ENCODE measurements at regions of chr19 and their contacts with region 1.

Region 1: DNA sequence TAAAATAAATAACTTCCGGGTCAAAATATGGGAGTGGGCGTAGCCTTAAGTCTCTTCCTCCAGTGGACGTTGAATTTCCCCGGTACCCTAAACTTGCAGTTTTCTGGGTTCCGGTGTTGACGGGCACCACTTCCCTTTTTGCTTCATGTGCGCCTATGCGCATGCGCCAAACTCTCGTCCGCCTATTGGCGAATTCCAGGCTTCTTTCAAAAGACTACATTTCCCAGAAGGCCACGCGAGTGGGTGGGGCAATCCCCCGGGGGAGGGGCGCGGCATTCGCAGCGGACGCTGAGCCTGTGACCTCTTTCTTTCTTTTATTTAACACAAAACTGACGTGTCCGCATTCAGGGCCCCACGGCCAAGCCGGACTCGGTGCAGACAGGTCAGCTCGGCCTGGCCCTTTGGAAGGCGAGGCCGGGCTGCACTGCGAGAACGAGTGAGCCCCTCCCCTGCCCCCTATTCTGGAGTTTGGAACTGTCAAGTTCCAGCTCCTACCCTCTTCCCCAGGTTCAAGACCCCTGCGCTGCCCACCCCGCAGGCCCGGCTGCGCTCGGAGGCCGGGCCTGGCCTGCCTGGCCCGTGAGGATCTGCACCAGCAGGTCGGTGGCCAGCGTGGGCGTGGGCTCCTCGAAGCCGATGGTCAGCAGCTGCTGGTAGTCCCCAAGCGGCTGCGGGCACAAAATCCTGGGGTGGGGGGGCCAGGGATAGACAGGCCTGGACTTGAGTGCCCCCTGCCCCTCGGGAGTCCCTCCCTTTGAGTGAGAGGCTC is 4.1 kb downstream of the C19orf67 start:
- DNase-seq: peak; percentile 98 to 100
- H3K4me3 ChIP-seq: peak overlapping the region; percentile 66 to 86
- H3K27ac ChIP-seq: peak overlapping the region; percentile 93 to 94
- H3K4me1 ChIP-seq: peaks cover 0 to 27% (median 20%) of the 10 kb centered on the region in 4 donors
- H3K27me3 ChIP-seq: no peaks in the 10 kb centered on the region
- CTCF ChIP-seq: peak in 1 of 2 experiments; percentile 25

Region 2: DNA sequence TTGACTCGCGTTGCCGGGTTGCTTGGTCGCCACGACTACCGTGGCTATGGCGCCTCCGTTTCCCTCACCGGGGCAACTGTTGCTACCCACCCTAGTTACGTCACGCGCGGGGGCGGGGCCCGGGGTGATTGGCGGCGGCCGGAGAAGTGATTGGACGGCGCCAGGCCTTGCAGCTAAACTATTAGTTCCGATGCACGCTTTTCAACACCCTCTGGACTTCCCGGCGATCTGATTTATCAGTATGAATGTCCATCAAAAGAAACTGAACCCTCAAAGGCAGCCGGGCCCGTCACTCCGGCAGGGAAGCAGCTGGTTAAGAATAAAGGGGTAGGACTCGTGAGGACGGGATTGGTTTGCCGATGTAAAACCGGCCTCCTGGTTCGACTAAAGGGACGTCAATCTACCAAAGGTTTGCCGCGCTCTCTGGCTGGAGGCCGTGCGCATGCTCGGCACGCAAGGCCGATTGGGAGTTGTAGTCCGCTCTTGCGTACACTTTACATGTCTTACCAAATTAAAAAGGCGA is 75.2 kb before region 1 on chr19 and contains the start of gene RFX1:
- intact Hi-C with region 1: loop called (anchors 5 kb)
- DNase-seq: peak; percentile 100
- H3K4me3 ChIP-seq: peak within 1 kb of the TSS; percentile 89 to 93
- H3K27ac ChIP-seq: peak within 1 kb of the TSS; percentile 100
- H3K4me1 ChIP-seq: peaks cover 0 to 38% (median 28%) of the 10 kb centered on the region in 4 donors
- H3K27me3 ChIP-seq: no peaks in the 10 kb centered on the region
- CTCF ChIP-seq: no peak

Region 3: DNA sequence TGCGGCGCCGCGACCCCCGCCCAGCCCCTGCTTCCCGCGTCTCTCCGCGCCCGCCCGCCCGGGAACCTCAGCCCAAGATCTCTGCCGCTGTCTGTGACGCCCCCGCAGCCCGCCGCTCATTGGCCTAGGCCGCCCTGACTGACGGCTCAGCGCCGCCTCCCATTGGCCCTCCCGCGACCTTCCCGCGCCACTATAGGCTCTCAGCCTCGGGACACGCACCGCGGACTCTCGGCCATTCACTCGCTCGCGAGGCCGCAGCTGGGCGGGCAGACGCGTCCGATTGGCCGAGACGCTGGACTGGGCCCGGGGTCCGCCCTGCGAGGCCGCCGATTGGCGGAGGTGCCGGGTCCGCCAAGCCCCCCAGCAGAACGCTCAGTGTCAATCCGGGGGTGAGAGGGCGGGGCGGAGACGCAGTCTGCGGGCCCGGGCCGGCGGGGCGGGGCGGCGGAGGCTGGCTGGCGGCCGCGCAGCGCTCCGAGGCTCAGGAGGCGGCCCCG is 36.2 kb after region 1 on chr19 and contains the start of gene PRKACA:
- intact Hi-C with region 1: loop called (anchors 5 kb)
- DNase-seq: peak; percentile 98 to 100
- H3K4me3 ChIP-seq: peak within 1 kb of the TSS; percentile 95 to 97
- H3K27ac ChIP-seq: peak within 1 kb of the TSS; percentile 94
- H3K4me1 ChIP-seq: peaks cover 0 to 60% (median 51%) of the 10 kb centered on the region in 4 donors
- H3K27me3 ChIP-seq: no peaks in the 10 kb centered on the region
- CTCF ChIP-seq: no peak

Measured in tibial artery (tissue), 4 donors.